ENCODE measurements at regions of chr1 and their contacts with region 1.

Region 1: DNA sequence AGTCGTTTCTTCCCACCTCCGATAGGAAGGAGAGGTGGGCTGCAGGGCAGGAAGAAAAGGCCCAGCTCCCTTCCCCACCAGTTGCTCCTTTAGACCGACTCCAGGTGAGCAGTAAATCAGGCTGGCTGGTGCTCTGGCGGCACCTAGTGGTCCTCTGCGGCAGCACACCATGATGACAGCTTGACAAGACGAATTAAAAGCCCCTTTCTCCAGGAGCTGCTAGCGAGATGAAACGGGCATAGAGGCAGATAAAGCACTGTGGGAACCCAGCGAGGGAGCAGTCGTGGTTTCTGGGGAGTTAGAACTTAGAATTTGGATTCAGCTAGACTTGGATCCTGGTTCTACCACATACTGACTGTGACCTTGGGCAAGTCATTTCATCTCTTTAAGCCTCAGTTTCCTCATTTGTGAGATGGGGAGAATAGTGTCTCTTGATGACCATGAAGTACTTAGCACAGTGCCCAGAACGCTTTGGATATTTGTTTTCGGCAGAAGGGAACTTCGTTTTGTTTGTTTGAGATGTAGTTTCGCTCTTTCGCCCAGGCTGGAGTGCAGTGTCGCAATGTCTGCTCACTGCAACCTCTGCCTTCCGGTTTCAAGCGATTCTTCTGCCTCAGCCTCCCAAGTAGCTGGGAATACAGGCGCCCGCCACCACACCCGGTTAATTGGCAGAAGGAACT is 21.8 kb upstream of the COL9A2 start:
- DNase-seq: peak; percentile 85
- ATAC-seq: peak; percentile 88 to 95
- H3K4me3 ChIP-seq: peak overlapping the region; percentile 19
- H3K27ac ChIP-seq: peak overlapping the region; percentile 73
- H3K4me1 ChIP-seq: peaks cover 14% of the 10 kb centered on the region
- H3K27me3 ChIP-seq: peaks cover 3% of the 10 kb centered on the region
- CTCF ChIP-seq: peak; percentile 97

Region 2: DNA sequence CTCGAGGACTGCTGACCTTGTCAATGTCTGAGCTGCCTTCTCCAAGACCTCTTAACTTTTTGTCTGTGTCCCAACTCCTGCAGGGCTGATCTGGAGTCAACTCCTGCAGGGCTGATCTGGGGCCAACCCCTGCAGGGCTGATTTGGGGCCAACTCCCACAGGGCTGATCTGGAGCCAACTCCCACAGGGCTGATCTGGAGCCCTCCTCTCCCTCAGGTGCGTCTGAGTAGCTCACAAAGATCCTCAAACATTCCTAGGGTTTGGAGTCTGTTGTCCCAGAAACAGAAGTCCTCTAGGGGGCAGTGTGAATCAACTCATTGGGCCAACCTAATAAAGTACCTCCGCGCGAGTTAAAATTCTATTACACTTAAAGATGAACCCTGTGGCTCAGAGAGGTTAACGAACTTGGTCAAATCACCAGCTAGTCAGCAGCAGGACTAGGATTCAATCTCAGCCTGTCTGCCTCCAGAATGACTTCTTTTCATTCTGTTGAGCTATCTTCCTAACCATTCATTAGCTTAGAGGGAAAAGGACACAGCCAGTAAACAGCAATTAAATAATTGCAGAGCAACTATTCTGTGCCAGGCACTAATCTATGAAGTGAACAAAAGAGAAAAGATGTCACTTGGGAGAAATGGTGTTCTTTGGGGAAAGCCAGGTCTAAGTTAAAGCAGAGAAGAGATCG is 194.9 kb before region 1 on chr1:
- intact Hi-C with region 1: loop called (anchors 10 kb)
- DNase-seq: no peak
- ATAC-seq: peak; percentile 87 to 88
- H3K4me3 ChIP-seq: no peak overlapping the region
- H3K27ac ChIP-seq: no peak overlapping the region
- H3K4me1 ChIP-seq: no peaks in the 10 kb centered on the region
- H3K27me3 ChIP-seq: no peaks in the 10 kb centered on the region
- CTCF ChIP-seq: peak; percentile 83

Measured in lower lobe of right lung (tissue), 2 donors.